IMR-90 (cell line): ENCODE measurements at regions of chr6 and their contacts with region 1.

Region 1: DNA sequence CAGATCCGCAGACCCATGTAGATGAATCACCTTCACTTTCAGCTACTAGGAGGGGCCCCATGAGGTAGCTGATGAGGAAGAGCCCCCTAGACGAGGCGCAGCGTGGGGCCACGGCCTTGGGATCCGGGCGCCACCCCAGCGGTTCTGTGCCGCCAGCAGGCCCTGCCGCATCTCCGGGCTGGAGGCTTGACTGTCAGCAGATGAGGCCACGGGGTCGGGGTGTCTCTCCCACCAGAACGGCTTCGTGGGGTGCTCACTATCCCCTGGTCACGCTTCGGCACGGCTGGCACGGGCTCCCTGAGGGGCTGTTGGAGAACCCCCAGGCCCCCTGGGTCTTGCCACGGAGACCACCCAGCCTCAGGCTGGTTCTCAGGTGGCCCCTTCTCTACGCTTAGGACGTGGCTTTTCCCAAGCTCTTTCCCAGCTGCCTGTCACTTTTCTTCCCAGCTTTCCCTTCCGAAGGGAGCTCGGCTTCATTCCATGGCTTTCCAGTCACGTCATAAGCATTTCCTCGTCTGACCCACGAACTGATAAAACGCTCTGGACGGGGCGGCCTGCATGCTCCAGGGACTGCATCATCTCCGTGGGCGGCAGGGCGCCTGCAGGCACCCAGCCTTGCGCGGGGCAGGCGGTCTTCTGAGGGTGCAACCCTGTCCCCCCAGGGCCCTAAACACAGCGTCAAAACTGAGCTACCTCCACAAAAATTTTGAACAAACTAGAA is 85.9 kb downstream of the THBS2 start:
- DNase-seq: peak; percentile 99
- ATAC-seq: peak; percentile 80
- H3K4me3 ChIP-seq: no peak overlapping the region
- H3K27ac ChIP-seq: peak overlapping the region; percentile 96
- H3K4me1 ChIP-seq: peaks cover 32% of the 10 kb centered on the region
- H3K27me3 ChIP-seq: no peaks in the 10 kb centered on the region
- CTCF ChIP-seq: no peak
- POLR2A ChIP-seq: no peak; the same call in 1 of the 2 replicates
- RAD21 ChIP-seq: peak; percentile 33; the same call in 1 of the 2 replicates

Region 2: DNA sequence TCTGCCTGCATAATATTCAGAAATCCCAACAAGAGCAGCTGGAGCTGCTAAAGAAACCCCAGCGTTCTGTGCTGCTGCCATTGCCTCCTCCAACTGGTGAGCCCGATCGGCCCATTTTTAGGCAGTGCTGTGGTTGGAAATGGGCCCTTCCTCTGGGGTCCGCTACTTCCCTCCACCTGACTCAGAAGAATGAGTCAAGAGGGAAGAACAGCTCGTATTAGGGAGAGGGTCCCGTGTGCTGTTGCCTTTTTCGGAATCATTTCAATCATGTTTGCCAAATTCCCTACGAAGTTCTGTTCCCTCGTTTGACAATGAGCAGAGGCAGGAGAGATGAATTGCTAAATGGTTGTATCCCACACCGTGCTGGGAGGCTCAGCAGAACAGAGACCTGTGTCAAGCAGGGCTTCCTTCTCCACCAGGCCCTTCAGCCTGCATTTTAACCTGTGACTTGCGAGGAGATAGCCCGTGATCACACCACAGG is 47.5 kb after region 1 on chr6:
- CTCF ChIA-PET with region 1: no interaction called
- POLR2A ChIA-PET with region 1: interaction called, 3 read pairs
- dilution Hi-C with region 1: no loop called
- in situ Hi-C with region 1: no loop called
- intact Hi-C with region 1: loop called (anchors 2 kb)
- DNase-seq: peak; percentile 35
- ATAC-seq: no peak
- H3K4me3 ChIP-seq: no peak overlapping the region
- H3K27ac ChIP-seq: peak overlapping the region; percentile 93
- H3K4me1 ChIP-seq: peaks cover 19% of the 10 kb centered on the region
- H3K27me3 ChIP-seq: no peaks in the 10 kb centered on the region
- CTCF ChIP-seq: no peak
- POLR2A ChIP-seq: no peak
- RAD21 ChIP-seq: no peak